Activated CD4-positive, alpha-beta T cell treated with anti-CD3 and anti-CD28 coated beads, Interleukin-2, amount 10 ng/mL, durations not matched to agents 24 days and 14 days (primary cell): ENCODE measurements at regions of chr2 and their contacts with region 1.

Region 1: GRCh38 chr2:236512902-236513435 is 56.7 kb upstream of the ACKR3 start:
- DNase-seq: peak; percentile 90
- H3K4me3 Mint-ChIP-seq: no peak overlapping the region
- H3K27ac Mint-ChIP-seq: no peak overlapping the region
- H3K4me1 Mint-ChIP-seq: peaks cover 2% of the 10 kb centered on the region
- H3K27me3 Mint-ChIP-seq: peaks cover 36% of the 10 kb centered on the region

Region 2: GRCh38 chr2:236352761-236353593 is 160.0 kb before region 1 on chr2:
- intact Hi-C with region 1: loop called (anchors 5 kb)
- DNase-seq: peak; percentile 77
- H3K4me3 Mint-ChIP-seq: no peak overlapping the region
- H3K27ac Mint-ChIP-seq: no peak overlapping the region
- H3K4me1 Mint-ChIP-seq: peaks cover 2% of the 10 kb centered on the region
- H3K27me3 Mint-ChIP-seq: no peaks in the 10 kb centered on the region

Region 3: GRCh38 chr2:236769921-236770671 is 257.1 kb after region 1 on chr2:
- intact Hi-C with region 1: no loop called
- DNase-seq: no peak
- H3K4me3 Mint-ChIP-seq: no peak overlapping the region
- H3K27ac Mint-ChIP-seq: no peak overlapping the region
- H3K4me1 Mint-ChIP-seq: no peaks in the 10 kb centered on the region
- H3K27me3 Mint-ChIP-seq: no peaks in the 10 kb centered on the region